ENCODE measurements at regions of chr11 and their contacts with region 1.

Region 1: GRCh38 chr11:30454132-30454531 is 131.2 kb downstream of the ARL14EP start:
- DNase-seq: no peak
- ATAC-seq: peak in 2 of 4 donors; percentile 52 to 75
- H3K4me3 ChIP-seq: no peak overlapping the region
- H3K27ac ChIP-seq: peak overlapping the region in 8 of 12 donors; percentile 2 to 47 (median 38)
- H3K4me1 ChIP-seq: peaks cover 4 to 61% (median 40%) of the 10 kb centered on the region in 12 donors
- H3K27me3 ChIP-seq: no peaks in the 10 kb centered on the region
- CTCF ChIP-seq: no peak
- POLR2A ChIP-seq: no peak

Region 2: DNA sequence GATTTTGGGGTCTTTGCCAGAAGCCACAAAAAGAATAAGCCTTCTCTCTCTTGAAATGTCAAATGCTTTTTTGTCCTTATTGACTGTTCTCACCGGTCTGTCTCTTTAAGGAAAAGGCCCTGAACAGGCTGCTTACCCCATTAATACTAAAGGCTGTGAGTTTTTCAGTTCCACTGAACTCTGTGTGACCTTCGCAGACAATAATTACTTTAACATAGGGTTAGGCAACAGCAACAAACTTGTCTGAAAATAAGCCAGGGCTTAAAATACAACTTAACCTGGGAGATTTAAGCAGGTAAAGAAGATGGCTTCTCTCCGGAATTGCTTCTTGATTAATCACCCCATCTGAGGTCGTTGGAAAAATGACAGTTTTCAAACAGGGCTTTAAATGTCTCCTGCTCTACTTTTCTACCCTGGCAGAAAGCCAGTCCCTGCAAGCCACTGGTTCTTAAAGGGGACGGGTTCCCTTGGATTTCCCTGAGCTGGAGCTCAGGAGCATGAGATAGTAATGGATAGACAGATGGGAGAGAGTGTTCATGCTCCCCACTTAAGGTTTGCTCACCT is 61.8 kb before region 1 on chr11:
- intact Hi-C with region 1: loop called in 1 of 10 experiments (anchors 10 kb)
- DNase-seq: peak in 3 of 5 donors; percentile 23 to 53 (median 52)
- ATAC-seq: peak in 3 of 4 donors; percentile 33 to 76 (median 73)
- H3K4me3 ChIP-seq: peak overlapping the region in 4 of 12 donors; percentile 11 to 39 (median 13)
- H3K27ac ChIP-seq: peak overlapping the region in 4 of 12 donors; percentile 2 to 13 (median 8)
- H3K4me1 ChIP-seq: peaks cover 3 to 16% (median 11%) of the 10 kb centered on the region in 12 donors
- H3K27me3 ChIP-seq: no peaks in the 10 kb centered on the region
- CTCF ChIP-seq: no peak
- POLR2A ChIP-seq: no peak

Region 3: GRCh38 chr11:30488304-30488998 is 34.3 kb after region 1 on chr11:
- intact Hi-C with region 1: loop called in 1 of 10 experiments (anchors 5 kb)
- DNase-seq: no peak
- ATAC-seq: peak in 2 of 4 donors; percentile 50 to 59
- H3K4me3 ChIP-seq: no peak overlapping the region
- H3K27ac ChIP-seq: peak overlapping the region in 2 of 12 donors; percentile 39 to 40
- H3K4me1 ChIP-seq: peaks cover 0 to 47% (median 23%) of the 10 kb centered on the region in 12 donors
- H3K27me3 ChIP-seq: no peaks in the 10 kb centered on the region
- CTCF ChIP-seq: no peak
- POLR2A ChIP-seq: no peak